Heart left ventricle (tissue), 16 donors: ENCODE measurements at regions of chr2 and their contacts with region 1.

Region 1: GRCh38 chr2:41414486-41415230 is 633.2 kb upstream of the PKDCC start:
- DNase-seq: peak in 1 of 5 donors; percentile 25
- ATAC-seq: peak; percentile 26 to 66 (median 48)
- H3K4me3 ChIP-seq: no peak overlapping the region
- H3K27ac ChIP-seq: no peak overlapping the region
- H3K4me1 ChIP-seq: peaks cover 0 to 6% (median 0%) of the 10 kb centered on the region in 12 donors
- H3K27me3 ChIP-seq: no peaks in the 10 kb centered on the region
- CTCF ChIP-seq: peak; percentile 43 to 68 (median 54)
- POLR2A ChIP-seq: no peak

Region 2: GRCh38 chr2:41488888-41489287 is 74.2 kb after region 1 on chr2:
- intact Hi-C with region 1: loop called in 1 of 10 experiments (anchors 5 kb)
- DNase-seq: no peak
- ATAC-seq: peak in 1 of 4 donors; percentile 41
- H3K4me3 ChIP-seq: no peak overlapping the region
- H3K27ac ChIP-seq: peak overlapping the region in 7 of 12 donors; percentile 4 to 68 (median 34)
- H3K4me1 ChIP-seq: peaks cover 0 to 17% (median 1%) of the 10 kb centered on the region in 12 donors
- H3K27me3 ChIP-seq: no peaks in the 10 kb centered on the region
- CTCF ChIP-seq: no peak
- POLR2A ChIP-seq: no peak

Region 3: GRCh38 chr2:41598161-41598894 is 183.7 kb after region 1 on chr2:
- intact Hi-C with region 1: loop called in 1 of 10 experiments (anchors 10 kb)
- DNase-seq: peak in 2 of 5 donors; percentile 14 to 30
- ATAC-seq: peak; percentile 89 to 94 (median 92)
- H3K4me3 ChIP-seq: no peak overlapping the region
- H3K27ac ChIP-seq: peak overlapping the region; percentile 44 to 86 (median 66)
- H3K4me1 ChIP-seq: peaks cover 6 to 33% (median 21%) of the 10 kb centered on the region in 12 donors
- H3K27me3 ChIP-seq: no peaks in the 10 kb centered on the region
- CTCF ChIP-seq: no peak
- POLR2A ChIP-seq: no peak

Region 4: GRCh38 chr2:41698678-41699422 is 284.2 kb after region 1 on chr2:
- intact Hi-C with region 1: loop called (anchors 2 to 5 kb)
- DNase-seq: peak; percentile 44 to 66 (median 48)
- ATAC-seq: peak; percentile 59 to 71 (median 68)
- H3K4me3 ChIP-seq: peak overlapping the region in 8 of 12 donors; percentile 18 to 42 (median 27)
- H3K27ac ChIP-seq: no peak overlapping the region
- H3K4me1 ChIP-seq: peaks cover 0 to 10% (median 0%) of the 10 kb centered on the region in 12 donors
- H3K27me3 ChIP-seq: no peaks in the 10 kb centered on the region
- CTCF ChIP-seq: peak; percentile 71 to 95 (median 88)
- POLR2A ChIP-seq: no peak

Region 5: DNA sequence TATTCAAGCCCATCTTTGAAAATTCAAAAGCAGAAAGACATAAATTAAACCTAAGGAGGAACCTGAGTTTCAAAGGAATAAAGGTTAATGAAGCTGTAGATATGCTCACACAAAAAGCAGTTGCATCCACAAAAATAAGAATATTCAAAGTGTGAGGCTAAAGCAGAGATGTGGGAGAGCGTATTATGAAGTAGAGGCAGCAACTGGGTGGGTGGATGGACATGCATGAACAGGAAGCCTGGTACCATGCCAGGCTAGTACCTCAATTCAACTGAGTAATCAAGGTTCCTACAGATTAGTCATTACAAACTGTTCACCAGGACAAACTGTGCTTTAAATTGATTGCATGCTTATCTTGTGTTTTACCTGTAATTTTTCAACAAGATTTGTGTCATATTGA is 303.2 kb after region 1 on chr2:
- intact Hi-C with region 1: no loop called
- DNase-seq: no peak
- ATAC-seq: no peak
- H3K4me3 ChIP-seq: no peak overlapping the region
- H3K27ac ChIP-seq: no peak overlapping the region
- H3K4me1 ChIP-seq: peaks cover 0 to 39% (median 10%) of the 10 kb centered on the region in 12 donors
- H3K27me3 ChIP-seq: no peaks in the 10 kb centered on the region
- CTCF ChIP-seq: no peak
- POLR2A ChIP-seq: no peak

Region 6: GRCh38 chr2:41782306-41783158 is 367.9 kb after region 1 on chr2:
- intact Hi-C with region 1: loop called in 5 of 10 experiments (anchors 5 to 10 kb)
- DNase-seq: peak in 1 of 5 donors; percentile 18
- ATAC-seq: no peak
- H3K4me3 ChIP-seq: no peak overlapping the region
- H3K27ac ChIP-seq: no peak overlapping the region
- H3K4me1 ChIP-seq: peaks cover 0 to 12% (median 0%) of the 10 kb centered on the region in 12 donors
- H3K27me3 ChIP-seq: no peaks in the 10 kb centered on the region
- CTCF ChIP-seq: peak; percentile 70 to 91 (median 84)
- POLR2A ChIP-seq: no peak